Heart left ventricle (tissue), 16 donors: ENCODE measurements at regions of chr2 and their contacts with region 1.

Region 1: GRCh38 chr2:221596192-221596591 is 24.1 kb upstream of the EPHA4 start:
- DNase-seq: peak in 1 of 5 donors; percentile 17
- ATAC-seq: no peak
- H3K4me3 ChIP-seq: no peak overlapping the region
- H3K27ac ChIP-seq: no peak overlapping the region
- H3K4me1 ChIP-seq: no peaks in the 10 kb centered on the region
- H3K27me3 ChIP-seq: no peaks in the 10 kb centered on the region
- CTCF ChIP-seq: no peak
- POLR2A ChIP-seq: no peak

Region 2: DNA sequence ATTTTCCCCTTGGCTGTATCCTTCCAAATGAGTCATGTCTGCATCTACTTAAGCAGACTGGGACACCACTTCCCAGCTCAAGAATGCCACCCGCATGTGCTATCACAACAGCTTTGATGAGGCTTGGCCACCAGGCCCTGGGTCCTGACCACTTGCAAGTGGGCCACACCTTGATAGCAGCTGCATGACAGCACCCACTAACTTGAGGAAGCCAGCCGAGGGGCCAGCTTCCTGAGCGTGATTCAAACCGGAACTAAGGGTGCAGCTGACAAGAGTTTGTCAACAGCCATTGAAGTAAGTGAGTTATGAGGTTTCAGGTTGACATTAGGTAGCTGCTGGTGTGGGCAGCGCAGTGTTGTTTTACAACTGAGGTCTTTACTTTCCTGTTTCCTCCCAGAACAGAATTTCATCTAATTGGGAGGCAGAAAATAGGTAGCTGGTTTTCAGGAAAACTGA is 78.5 kb before region 1 on chr2:
- intact Hi-C with region 1: no loop called
- DNase-seq: peak in 4 of 5 donors; percentile 20 to 68 (median 43)
- ATAC-seq: peak in 3 of 4 donors; percentile 63 to 67 (median 66)
- H3K4me3 ChIP-seq: peak overlapping the region in 1 of 12 donors; percentile 16
- H3K27ac ChIP-seq: peak overlapping the region in 6 of 12 donors; percentile 25 to 66 (median 38)
- H3K4me1 ChIP-seq: peaks cover 5 to 62% (median 31%) of the 10 kb centered on the region in 12 donors
- H3K27me3 ChIP-seq: no peaks in the 10 kb centered on the region
- CTCF ChIP-seq: no peak
- POLR2A ChIP-seq: no peak

Region 3: GRCh38 chr2:221705185-221705877 is 109.1 kb after region 1 on chr2:
- intact Hi-C with region 1: no loop called
- DNase-seq: no peak
- ATAC-seq: no peak
- H3K4me3 ChIP-seq: no peak overlapping the region
- H3K27ac ChIP-seq: no peak overlapping the region
- H3K4me1 ChIP-seq: no peaks in the 10 kb centered on the region
- H3K27me3 ChIP-seq: no peaks in the 10 kb centered on the region
- CTCF ChIP-seq: no peak
- POLR2A ChIP-seq: no peak

Region 4: DNA sequence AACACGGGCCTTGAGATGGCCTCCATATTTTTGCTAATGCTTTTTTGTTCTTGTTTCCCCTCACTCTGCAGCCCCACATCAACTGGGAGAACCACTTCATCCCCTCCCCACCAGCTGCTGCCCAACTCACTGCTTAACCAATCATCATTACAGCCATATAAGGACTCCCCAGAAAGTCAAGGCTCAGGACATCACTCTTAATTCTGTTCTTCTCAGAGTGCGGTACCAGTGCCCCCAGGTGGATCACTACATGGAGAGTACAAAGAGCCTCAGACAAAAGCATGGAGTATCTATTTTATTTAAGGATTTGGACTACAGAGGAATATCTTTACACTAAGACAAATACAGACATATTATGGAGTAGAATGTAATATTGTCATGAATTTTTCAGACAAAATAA is 362.0 kb after region 1 on chr2:
- intact Hi-C with region 1: loop called in 1 of 10 experiments (anchors 10 kb)
- DNase-seq: no peak
- ATAC-seq: peak in 1 of 4 donors; percentile 48
- H3K4me3 ChIP-seq: no peak overlapping the region
- H3K27ac ChIP-seq: no peak overlapping the region
- H3K4me1 ChIP-seq: no peaks in the 10 kb centered on the region
- H3K27me3 ChIP-seq: no peaks in the 10 kb centered on the region
- CTCF ChIP-seq: no peak
- POLR2A ChIP-seq: no peak